Activated CD4-positive, alpha-beta T cell treated with anti-CD3 and anti-CD28 coated beads for 36 hours (primary cell): ENCODE measurements at regions of chr4 and their contacts with region 1.

Region 1: GRCh38 chr4:45530498-45530897 is 593.4 kb downstream of the GABRG1 start:
- DNase-seq: no peak
- ATAC-seq: no peak
- H3K4me3 Mint-ChIP-seq: no peak overlapping the region
- H3K27ac Mint-ChIP-seq: no peak overlapping the region
- H3K4me1 Mint-ChIP-seq: no peaks in the 10 kb centered on the region
- H3K27me3 Mint-ChIP-seq: no peaks in the 10 kb centered on the region

Region 2: DNA sequence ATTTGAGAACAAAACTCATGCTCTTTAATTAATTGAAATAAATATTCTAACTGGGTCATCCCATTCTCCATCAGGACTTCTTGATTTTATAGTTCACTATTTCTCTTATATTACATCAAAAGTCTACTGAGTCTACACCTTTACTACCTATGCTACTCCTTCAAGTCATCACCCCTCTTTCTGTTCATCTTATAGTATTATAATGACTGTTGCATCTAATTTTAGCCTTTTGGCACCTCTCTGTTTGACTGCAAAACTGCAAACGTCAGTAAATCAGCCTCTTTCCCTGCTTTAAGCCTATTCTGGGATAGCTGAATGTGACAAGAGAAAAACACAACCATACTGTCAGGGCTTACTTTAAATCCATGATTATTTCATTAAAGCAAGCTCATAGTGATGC is 45.8 kb before region 1 on chr4:
- CTCF ChIA-PET with region 1: no interaction called
- POLR2A ChIA-PET with region 1: interaction called, 10 read pairs
- intact Hi-C with region 1: no loop called
- DNase-seq: no peak
- ATAC-seq: no peak
- H3K4me3 Mint-ChIP-seq: no peak overlapping the region
- H3K27ac Mint-ChIP-seq: no peak overlapping the region
- H3K4me1 Mint-ChIP-seq: no peaks in the 10 kb centered on the region
- H3K27me3 Mint-ChIP-seq: no peaks in the 10 kb centered on the region